Activated naive CD4-positive, alpha-beta T cell treated with anti-CD3 and anti-CD28 coated beads for 36 hours (primary cell): ENCODE measurements at regions of chr9 and their contacts with region 1.

Region 1: DNA sequence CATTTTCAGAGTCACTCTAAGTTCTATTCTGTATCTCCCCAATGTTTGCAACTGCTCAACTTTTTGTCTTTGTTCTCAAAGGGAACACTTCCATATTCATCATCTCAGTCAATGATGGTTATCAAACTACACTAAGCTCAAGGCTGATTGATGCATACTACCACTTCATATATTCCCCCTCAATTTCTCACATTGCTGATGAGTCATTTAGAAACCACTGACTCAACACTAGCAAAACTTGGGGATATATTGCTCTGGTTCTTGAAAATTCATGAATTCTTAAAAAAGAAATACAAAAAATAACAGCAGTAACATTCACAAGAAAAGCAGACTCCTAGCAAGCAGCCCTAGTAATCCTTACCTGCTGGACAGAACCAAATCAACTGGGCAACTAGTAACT is 52.2 kb downstream of the ABHD17B start:
- DNase-seq: no peak
- H3K4me3 Mint-ChIP-seq: no peak overlapping the region
- H3K27ac Mint-ChIP-seq: peak overlapping the region; percentile 47
- H3K4me1 Mint-ChIP-seq: peaks cover 18% of the 10 kb centered on the region
- H3K27me3 Mint-ChIP-seq: no peaks in the 10 kb centered on the region

Region 2: DNA sequence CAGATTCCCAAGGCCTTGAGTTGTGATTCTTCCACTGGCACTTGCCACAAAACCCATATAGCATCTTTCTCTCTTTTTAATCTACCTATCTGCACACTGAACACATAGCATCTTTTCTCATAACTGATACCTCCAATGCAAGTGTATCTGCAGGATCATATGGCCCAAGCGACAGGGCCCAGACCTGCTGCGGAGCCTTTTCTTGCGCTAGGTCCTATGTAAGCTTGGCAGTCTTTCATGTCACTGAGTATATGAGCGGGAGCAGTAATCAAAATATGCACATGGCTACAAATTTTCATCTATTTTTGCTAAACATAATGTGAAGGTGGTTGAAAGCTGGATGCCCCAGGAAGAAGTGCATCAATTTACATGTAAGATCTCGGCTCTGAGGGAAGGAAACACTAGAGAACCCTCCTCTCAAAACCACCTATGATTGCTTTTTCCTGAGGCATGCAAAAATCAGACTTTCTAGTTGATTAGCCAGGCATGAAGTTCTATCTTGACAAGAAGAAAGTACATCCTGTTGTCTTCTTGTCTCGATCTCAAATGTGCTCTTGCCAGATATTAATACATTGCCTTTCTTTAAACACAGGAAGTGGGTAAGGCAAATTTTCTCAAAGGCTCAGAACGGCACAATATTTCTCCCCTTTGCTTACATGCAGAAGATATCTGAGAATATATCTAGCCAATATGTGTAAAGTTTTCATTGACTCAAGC is 63.6 kb before region 1 on chr9:
- CTCF ChIA-PET with region 1: no interaction called
- intact Hi-C with region 1: loop called (anchors 2 kb)
- DNase-seq: no peak
- H3K4me3 Mint-ChIP-seq: no peak overlapping the region
- H3K27ac Mint-ChIP-seq: peak overlapping the region; percentile 72
- H3K4me1 Mint-ChIP-seq: peaks cover 61% of the 10 kb centered on the region
- H3K27me3 Mint-ChIP-seq: no peaks in the 10 kb centered on the region

Region 3: GRCh38 chr9:71885467-71885866 is 26.7 kb after region 1 on chr9:
- CTCF ChIA-PET with region 1: no interaction called
- intact Hi-C with region 1: loop called (anchors 1 kb)
- DNase-seq: no peak
- H3K4me3 Mint-ChIP-seq: no peak overlapping the region
- H3K27ac Mint-ChIP-seq: no peak overlapping the region
- H3K4me1 Mint-ChIP-seq: peaks cover 33% of the 10 kb centered on the region
- H3K27me3 Mint-ChIP-seq: no peaks in the 10 kb centered on the region